ENCODE measurements at regions of chr6 and their contacts with region 1.

Region 1: GRCh38 chr6:132669690-132670291 is 10.8 kb upstream of the TAAR1 start:
- DNase-seq: peak; percentile 62
- H3K4me3 ChIP-seq: no peak overlapping the region
- H3K27ac ChIP-seq: no peak overlapping the region
- H3K4me1 ChIP-seq: no peaks in the 10 kb centered on the region
- H3K27me3 ChIP-seq: peaks cover 6% of the 10 kb centered on the region
- CTCF ChIP-seq: peak; percentile 59

Region 2: DNA sequence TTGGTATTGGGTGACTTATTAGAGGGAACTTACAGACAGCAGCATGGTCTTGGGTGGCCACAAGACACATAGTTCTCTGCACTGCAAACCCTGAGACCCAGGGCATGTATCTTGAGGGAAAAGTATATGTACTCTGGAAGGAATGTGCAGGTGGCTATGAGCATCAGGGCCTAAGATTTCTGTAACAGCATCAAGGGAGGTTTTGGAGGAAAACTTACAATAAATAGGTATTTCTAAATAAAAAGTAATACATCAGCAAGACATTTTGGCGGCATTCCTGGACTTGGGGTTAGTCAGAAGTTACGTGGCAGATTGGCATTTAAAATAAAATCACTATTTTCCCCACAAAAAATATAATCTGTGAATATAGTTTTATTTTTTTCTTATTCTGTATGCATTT is 148.8 kb before region 1 on chr6:
- CTCF ChIA-PET with region 1: no interaction called
- POLR2A ChIA-PET with region 1: no interaction called
- intact Hi-C with region 1: no loop called
- DNase-seq: no peak
- H3K4me3 ChIP-seq: no peak overlapping the region
- H3K27ac ChIP-seq: no peak overlapping the region
- H3K4me1 ChIP-seq: no peaks in the 10 kb centered on the region
- H3K27me3 ChIP-seq: peaks cover 37% of the 10 kb centered on the region
- CTCF ChIP-seq: no peak

Region 3: GRCh38 chr6:132537145-132537544 is 132.6 kb before region 1 on chr6:
- CTCF ChIA-PET with region 1: no interaction called
- POLR2A ChIA-PET with region 1: no interaction called
- intact Hi-C with region 1: loop called (anchors 5 kb)
- DNase-seq: no peak
- H3K4me3 ChIP-seq: no peak overlapping the region
- H3K27ac ChIP-seq: no peak overlapping the region
- H3K4me1 ChIP-seq: no peaks in the 10 kb centered on the region
- H3K27me3 ChIP-seq: peaks cover 57% of the 10 kb centered on the region
- CTCF ChIP-seq: no peak

Region 4: GRCh38 chr6:132820629-132821381 is 151.0 kb after region 1 on chr6:
- CTCF ChIA-PET with region 1: interaction called, 4 read pairs
- POLR2A ChIA-PET with region 1: interaction called, 5 read pairs
- intact Hi-C with region 1: loop called (anchors 5 kb)
- DNase-seq: no peak
- H3K4me3 ChIP-seq: no peak overlapping the region
- H3K27ac ChIP-seq: peak overlapping the region; percentile 47
- H3K4me1 ChIP-seq: peaks cover 10% of the 10 kb centered on the region
- H3K27me3 ChIP-seq: no peaks in the 10 kb centered on the region
- CTCF ChIP-seq: no peak

Region 5: GRCh38 chr6:132952031-132952867 is 282.5 kb after region 1 on chr6:
- CTCF ChIA-PET with region 1: no interaction called
- POLR2A ChIA-PET with region 1: no interaction called
- intact Hi-C with region 1: loop called (anchors 10 kb)
- DNase-seq: no peak
- H3K4me3 ChIP-seq: no peak overlapping the region
- H3K27ac ChIP-seq: no peak overlapping the region
- H3K4me1 ChIP-seq: no peaks in the 10 kb centered on the region
- H3K27me3 ChIP-seq: peaks cover 96% of the 10 kb centered on the region
- CTCF ChIP-seq: no peak

Region 6: DNA sequence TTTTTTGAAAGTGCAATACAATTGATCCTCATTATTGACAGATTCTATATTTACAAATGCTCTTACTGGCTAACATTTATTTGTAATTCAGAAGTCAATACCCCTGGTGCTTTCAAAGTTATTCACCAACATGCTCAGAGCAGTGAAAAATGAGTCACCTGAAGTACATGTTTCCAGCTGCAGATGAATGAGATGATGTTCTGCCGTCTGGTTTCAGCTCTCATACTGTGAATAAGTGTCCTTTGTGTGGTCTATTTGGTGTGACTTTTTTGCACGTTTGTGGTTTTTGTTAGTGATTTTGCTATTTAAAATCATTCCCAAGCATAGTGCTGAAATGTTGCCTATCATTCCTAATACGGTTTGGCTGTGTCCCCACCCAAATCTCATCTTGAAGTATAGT is 549.1 kb after region 1 on chr6:
- CTCF ChIA-PET with region 1: no interaction called
- POLR2A ChIA-PET with region 1: no interaction called
- intact Hi-C with region 1: no loop called
- DNase-seq: no peak
- H3K4me3 ChIP-seq: no peak overlapping the region
- H3K27ac ChIP-seq: no peak overlapping the region
- H3K4me1 ChIP-seq: no peaks in the 10 kb centered on the region
- H3K27me3 ChIP-seq: no peaks in the 10 kb centered on the region
- CTCF ChIP-seq: no peak

Region 7: GRCh38 chr6:133553652-133554051 is 883.9 kb after region 1 on chr6:
- CTCF ChIA-PET with region 1: no interaction called
- POLR2A ChIA-PET with region 1: no interaction called
- intact Hi-C with region 1: loop called (anchors 5 kb)
- DNase-seq: peak; percentile 64
- H3K4me3 ChIP-seq: no peak overlapping the region
- H3K27ac ChIP-seq: no peak overlapping the region
- H3K4me1 ChIP-seq: no peaks in the 10 kb centered on the region
- H3K27me3 ChIP-seq: no peaks in the 10 kb centered on the region
- CTCF ChIP-seq: peak; percentile 69